GM23248 (cell line): ENCODE measurements at regions of chr9 and their contacts with region 1.

Region 1: DNA sequence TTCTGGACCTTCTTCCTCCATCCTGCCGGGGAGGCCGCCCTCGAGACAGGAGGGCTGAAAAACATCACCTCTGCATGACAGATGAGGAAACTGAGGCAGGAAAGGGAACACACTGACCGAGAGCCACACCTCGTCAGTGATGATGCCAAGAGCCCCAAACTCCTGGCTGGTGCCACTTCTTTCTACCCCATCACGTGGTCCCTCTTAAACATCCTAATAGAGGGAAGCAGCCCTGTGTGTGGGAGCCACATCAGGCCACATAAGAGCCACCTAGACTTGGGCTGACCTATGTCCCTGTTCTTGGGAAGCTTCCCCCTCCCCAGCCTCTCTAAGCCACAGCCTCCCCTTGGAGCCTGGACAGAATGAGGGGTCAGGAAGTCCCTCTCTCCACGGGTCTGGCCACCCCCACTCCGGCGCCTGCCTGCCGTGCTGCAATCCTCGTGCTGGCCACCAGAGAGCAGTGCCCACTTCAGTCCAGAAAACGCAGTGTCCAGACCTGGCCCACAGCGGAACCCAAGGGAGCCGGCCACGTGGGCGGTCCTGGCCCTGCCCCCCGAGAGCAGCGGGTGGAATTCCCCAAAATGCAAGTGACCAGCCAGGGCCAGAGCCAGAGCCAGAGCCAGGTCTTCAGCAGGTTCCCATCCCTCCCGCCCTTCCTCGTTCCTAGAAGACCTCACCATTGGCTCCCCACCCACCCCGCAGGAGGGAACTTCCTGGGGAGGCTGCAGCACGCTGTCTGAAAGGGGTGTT is 54.7 kb upstream of the SARDH start:
- DNase-seq: peak; percentile 89
- H3K4me3 ChIP-seq: no peak overlapping the region
- H3K27ac ChIP-seq: no peak overlapping the region
- H3K4me1 ChIP-seq: peaks cover 3% of the 10 kb centered on the region; the same call in 1 of the 2 replicates
- H3K27me3 ChIP-seq: no peaks in the 10 kb centered on the region

Region 2: GRCh38 chr9:133737774-133738639 is 54.9 kb before region 1 on chr9 and contains the start of gene SARDH:
- in situ Hi-C with region 1: no loop called
- DNase-seq: peak; percentile 50
- H3K4me3 ChIP-seq: peak within 1 kb of the TSS; percentile 55
- H3K27ac ChIP-seq: no peak within 1 kb of the TSS
- H3K4me1 ChIP-seq: no peaks in the 10 kb centered on the region
- H3K27me3 ChIP-seq: 0 out of 2 replicates have a peak, but pooled peaks cover 12% of the 10 kb centered on the region
- total RNA-seq, gene SARDH: 0.89 and 2.4 TPM in 2 replicates

Region 3: DNA sequence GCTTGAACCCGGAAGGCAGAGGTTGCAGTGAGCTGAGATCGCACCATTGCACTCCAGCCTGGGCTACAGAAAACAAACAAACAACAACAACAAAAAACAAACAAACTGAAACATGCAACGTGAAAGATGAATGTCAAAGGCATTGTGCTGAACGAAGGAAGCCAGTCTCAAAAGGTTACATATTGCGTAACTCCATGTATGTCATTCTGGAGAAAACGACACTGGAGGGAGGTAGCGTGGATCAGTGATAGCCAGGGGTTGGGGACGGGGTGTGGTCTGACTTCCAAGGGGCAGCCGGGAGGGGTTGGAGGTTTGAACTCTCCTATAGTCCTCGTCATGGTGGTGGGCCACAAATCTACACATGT is 330.9 kb after region 1 on chr9:
- in situ Hi-C with region 1: loop called (anchors 25 kb)
- DNase-seq: peak; percentile 16
- H3K4me3 ChIP-seq: no peak overlapping the region
- H3K27ac ChIP-seq: no peak overlapping the region
- H3K4me1 ChIP-seq: no peaks in the 10 kb centered on the region
- H3K27me3 ChIP-seq: no peaks in the 10 kb centered on the region